ENCODE measurements at regions of chr12 and their contacts with region 1.

Region 1: DNA sequence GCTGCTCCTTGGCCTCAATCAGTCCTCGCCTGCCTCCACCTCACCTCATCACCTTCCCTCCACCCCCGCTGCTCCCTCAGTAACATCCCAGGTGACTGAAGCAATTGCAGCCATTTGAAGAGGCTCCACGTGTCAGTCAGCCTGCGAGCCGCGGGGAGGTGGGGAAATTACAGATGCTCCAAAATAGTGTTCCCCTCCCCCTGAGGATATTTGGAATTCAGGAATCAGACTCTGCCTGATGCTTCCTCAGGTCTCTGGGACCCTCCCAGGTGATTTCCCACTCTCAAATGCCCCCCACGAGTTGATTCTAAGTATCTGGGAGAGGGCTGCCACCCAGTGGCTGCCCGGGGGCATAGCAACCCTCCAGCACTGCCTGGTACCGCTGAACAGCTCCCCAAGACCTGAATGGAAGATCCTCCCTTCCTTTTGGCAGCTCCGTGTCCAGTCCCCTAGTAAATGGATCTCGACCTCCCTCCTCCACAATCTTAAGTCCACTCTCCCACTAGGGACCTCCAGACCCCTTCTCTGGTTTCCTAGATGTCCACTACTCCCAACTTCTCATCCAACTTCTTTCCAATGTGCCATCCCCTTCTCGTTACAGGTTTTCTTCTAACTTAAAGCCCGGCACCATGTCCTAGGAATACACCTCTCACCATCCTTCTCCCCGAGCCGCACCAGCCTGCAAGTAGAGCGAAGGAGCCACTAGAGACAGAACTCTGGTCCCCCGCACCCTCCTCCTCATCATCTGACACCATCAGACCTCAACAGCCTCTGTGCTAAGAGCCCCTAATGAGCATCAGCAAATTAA is 1.4 kb upstream of the ASIC1 start:
- DNase-seq: peak; percentile 43 to 61 (median 54)
- ATAC-seq: peak; percentile 57
- H3K4me3 ChIP-seq: no peak overlapping the region
- H3K4me1 ChIP-seq: peaks cover 15% of the 10 kb centered on the region
- CTCF ChIP-seq: peak; percentile 87

Region 2: GRCh38 chr12:49776413-49776812 is 279.6 kb before region 1 on chr12:
- intact Hi-C with region 1: no loop called
- DNase-seq: peak in 2 of 3 donors; percentile 54 to 64
- ATAC-seq: peak; percentile 88
- H3K4me3 ChIP-seq: no peak overlapping the region
- H3K4me1 ChIP-seq: no peaks in the 10 kb centered on the region
- CTCF ChIP-seq: peak; percentile 44

Region 3: DNA sequence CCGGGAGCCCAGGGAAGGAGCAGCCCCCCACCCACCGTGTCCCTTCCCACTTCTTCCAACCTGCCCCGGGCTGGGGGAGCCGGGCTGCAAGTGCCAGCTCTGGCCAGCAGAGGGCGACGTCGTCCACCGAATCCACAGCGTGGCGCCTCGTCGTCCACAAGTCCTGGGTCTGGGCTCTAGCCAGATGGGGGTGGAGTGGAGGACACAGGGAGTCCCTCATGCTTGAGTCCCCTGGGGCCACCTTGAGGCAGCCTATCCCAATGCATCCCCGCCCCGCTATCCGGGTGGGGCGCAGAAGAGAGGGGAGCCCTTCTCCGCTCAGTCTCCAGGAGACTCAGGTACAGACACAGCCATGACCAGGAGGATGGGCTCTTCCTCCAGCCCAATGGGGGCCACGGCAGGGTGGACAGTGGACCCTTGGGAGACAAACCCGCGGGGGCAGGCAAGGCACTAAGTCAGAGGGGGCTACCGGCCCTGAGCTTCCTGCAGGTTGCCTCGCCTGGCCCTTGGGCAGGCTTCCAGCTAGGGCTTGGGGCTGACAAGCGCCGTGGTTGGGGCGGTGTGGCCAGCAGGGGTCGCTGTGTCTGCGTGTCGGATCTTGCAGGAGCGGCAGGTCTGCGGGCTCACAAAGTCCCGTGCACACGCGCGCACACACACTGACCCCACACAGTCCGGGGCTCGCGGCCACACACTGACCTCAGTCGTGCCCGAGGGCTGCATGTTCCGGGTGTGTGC is 88.8 kb before region 1 on chr12:
- intact Hi-C with region 1: loop called (anchors 5 to 10 kb)
- DNase-seq: peak; percentile 91 to 96 (median 94)
- ATAC-seq: peak; percentile 92
- H3K4me3 ChIP-seq: no peak overlapping the region
- H3K4me1 ChIP-seq: peaks cover 3% of the 10 kb centered on the region
- CTCF ChIP-seq: peak; percentile 89

Region 4: DNA sequence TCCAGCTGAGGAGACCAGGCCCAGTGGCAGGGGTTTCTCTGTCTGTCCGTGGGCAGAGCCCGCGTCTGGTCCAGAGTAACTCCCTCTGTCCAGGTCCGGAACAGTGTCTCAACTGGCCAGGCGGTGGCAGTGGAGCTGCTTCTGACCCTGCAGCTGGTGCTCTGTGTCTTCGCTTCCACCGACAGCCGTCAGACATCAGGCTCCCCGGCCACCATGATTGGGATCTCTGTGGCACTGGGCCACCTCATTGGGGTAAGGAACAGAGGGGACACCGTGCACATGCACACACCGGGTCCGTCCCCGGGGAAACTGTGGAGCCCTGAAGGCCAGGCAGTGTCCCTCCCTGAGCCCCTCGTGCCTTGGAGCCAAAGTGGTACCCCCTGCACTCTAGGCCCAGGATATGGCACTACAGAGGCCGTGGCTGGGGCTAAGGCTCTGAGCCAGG is 81.8 kb before region 1 on chr12:
- intact Hi-C with region 1: loop called (anchors 5 to 10 kb)
- DNase-seq: peak in 2 of 3 donors; percentile 59
- ATAC-seq: peak; percentile 76
- H3K4me3 ChIP-seq: no peak overlapping the region
- H3K4me1 ChIP-seq: no peaks in the 10 kb centered on the region
- CTCF ChIP-seq: peak; percentile 16

Region 5: GRCh38 chr12:50174971-50175715 is 119.1 kb after region 1 on chr12:
- intact Hi-C with region 1: no loop called
- DNase-seq: peak in 1 of 3 donors; percentile 50
- ATAC-seq: peak; percentile 54
- H3K4me3 ChIP-seq: no peak overlapping the region
- H3K4me1 ChIP-seq: no peaks in the 10 kb centered on the region
- CTCF ChIP-seq: no peak